Naive thymus-derived CD4-positive, alpha-beta T cell (primary cell): ENCODE measurements at regions of chr19 and their contacts with region 1.

Region 1: DNA sequence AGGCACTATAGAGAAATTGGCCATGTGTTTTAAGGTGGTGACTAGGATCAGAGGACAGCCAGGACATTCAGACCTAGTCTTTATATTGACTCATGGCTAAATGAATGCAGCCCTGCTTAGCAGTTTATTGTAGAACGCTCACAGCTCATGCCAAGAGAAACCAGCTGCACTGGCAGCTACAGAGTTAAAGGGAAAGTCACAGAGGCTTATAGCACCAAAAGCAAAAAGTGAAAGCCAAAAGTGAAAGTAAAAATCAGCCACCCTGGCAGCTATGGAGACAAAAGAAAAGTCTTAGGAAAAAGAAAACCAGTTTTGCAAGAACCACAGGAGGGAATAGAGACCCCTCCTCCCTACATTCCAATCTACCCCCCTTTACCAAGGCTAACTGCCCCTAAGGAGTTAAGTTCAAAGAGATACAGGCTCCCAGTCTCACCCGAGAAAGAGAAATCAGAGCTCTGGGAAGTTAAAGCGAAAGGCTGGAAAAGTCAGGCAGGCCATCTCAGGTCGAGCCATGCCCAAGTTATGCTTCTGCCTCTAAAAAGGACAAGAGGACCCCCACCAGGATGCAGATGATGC is 99.0 kb downstream of the ZNF429 start:
- DNase-seq: peak in 6 of 9 donors; percentile 24 to 55 (median 49)
- ATAC-seq: peak; percentile 67
- H3K4me3 ChIP-seq: peak overlapping the region; percentile 65
- H3K4me3 Mint-ChIP-seq: peak overlapping the region; percentile 80 to 96 (median 92)
- H3K27ac ChIP-seq: peak overlapping the region; percentile 73
- H3K27ac Mint-ChIP-seq: peak overlapping the region; percentile 84 to 97 (median 96)
- H3K4me1 ChIP-seq: peaks cover 0 to 9% of the 10 kb centered on the region in 2 donors
- H3K4me1 Mint-ChIP-seq: peaks cover 17 to 31% (median 21%) of the 10 kb centered on the region in 7 donors
- H3K27me3 ChIP-seq: no peaks in the 10 kb centered on the region
- H3K27me3 Mint-ChIP-seq: no peaks in the 10 kb centered on the region

Region 2: DNA sequence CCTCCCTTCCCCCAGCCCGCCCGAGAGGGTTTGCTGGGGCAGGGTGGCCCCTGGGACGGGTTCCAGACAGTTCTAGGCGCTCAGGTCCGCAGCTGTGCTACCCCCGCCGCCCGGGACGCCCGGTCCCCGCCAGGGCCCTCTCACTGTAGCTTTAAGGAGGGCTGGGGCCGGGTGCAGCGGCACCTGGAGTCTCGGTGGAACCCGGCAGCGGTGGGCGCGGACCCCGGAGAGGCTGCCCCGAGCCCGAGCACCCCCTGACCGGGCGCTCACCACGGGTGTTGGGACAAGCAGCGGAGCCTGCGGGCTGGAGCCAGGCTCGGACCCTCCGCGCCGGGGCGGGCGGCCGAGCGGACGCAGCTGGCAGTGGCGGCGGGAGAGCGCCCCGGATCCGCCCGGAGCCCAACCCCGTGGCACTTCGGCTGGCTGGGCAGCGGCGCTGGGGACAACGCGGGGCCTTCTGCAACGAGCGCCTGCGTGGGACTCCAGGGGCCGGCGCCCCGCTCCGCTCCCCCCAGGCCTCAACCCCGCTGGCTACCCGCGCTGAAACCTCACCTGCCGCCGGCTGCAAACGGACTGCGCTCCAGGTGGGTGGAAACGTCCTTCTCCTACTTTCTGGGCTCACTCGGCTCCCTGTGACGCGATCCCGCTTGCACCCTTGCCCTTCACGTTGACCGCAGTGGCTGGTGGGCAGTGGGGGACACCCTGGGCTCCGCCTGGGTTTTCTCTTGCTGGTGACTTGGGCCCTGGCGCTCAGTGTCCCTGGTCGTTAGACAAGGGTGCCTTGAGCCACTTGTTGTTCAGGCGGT is 17.9 kb before region 1 on chr19:
- CTCF ChIA-PET with region 1: no interaction called
- POLR2A ChIA-PET with region 1: interaction called, 22 read pairs
- intact Hi-C with region 1: loop called in 1 of 2 experiments (anchors 2 kb)
- DNase-seq: peak in 6 of 9 donors; percentile 11 to 43 (median 34)
- ATAC-seq: peak; percentile 69
- H3K4me3 ChIP-seq: peak overlapping the region; percentile 39
- H3K4me3 Mint-ChIP-seq: peak overlapping the region; percentile 47 to 91 (median 82)
- H3K27ac ChIP-seq: peak overlapping the region; percentile 48
- H3K27ac Mint-ChIP-seq: peak overlapping the region in 5 of 9 donors; percentile 73 to 88 (median 80)
- H3K4me1 ChIP-seq: peaks cover 0 to 12% of the 10 kb centered on the region in 2 donors
- H3K4me1 Mint-ChIP-seq: peaks cover 0 to 50% (median 19%) of the 10 kb centered on the region in 7 donors
- H3K27me3 ChIP-seq: no peaks in the 10 kb centered on the region
- H3K27me3 Mint-ChIP-seq: peaks cover 0 to 27% (median 7%) of the 10 kb centered on the region in 5 donors